Prostate gland (tissue), 2 donors: ENCODE measurements at regions of chr7 and their contacts with region 1.

Region 1: GRCh38 chr7:86926732-86927131 is 132.7 kb downstream of the ELAPOR2 start:
- DNase-seq: no peak
- H3K4me3 ChIP-seq: no peak overlapping the region
- H3K27ac ChIP-seq: no peak overlapping the region
- H3K4me1 ChIP-seq: no peaks in the 10 kb centered on the region
- H3K27me3 ChIP-seq: no peaks in the 10 kb centered on the region
- CTCF ChIP-seq: peak in 3 of 4 experiments; percentile 26 to 56 (median 48)
- POLR2A ChIP-seq: no peak

Region 2: DNA sequence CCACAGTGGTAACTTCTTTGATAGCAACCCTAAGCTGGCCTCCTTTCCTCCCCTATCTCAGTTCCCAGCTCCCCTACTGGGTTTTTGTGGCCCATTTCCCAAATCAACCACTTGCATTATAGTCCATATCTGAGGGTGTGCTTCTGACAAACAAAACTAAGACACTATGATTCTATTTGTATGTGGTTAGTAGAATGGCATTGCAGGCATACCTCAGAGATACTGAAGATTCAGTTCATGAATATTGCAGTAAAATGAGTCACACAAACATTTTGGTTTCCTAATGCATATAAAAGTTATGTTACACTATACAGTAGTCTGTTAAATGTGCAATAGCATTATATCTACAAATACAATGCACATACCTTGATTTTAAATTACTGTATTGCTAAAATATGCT is 308.2 kb after region 1 on chr7:
- intact Hi-C with region 1: loop called (anchors 5 kb)
- DNase-seq: no peak
- H3K4me3 ChIP-seq: no peak overlapping the region
- H3K27ac ChIP-seq: no peak overlapping the region
- H3K4me1 ChIP-seq: no peaks in the 10 kb centered on the region
- H3K27me3 ChIP-seq: no peaks in the 10 kb centered on the region
- CTCF ChIP-seq: no peak
- POLR2A ChIP-seq: no peak